Activated T-helper 2 cell treated with anti-CD3 and anti-CD28 coated beads, Interferon-gamma antibody, Interleukin-2, Interleukin-4, amounts not matched to agents 10 μg/mL and 5 μg/mL and 100 μg/mL, durations not matched to agents 14 hours and 24 hours and 36 hours (primary cell): ENCODE measurements at regions of chr11 and their contacts with region 1.

Region 1: DNA sequence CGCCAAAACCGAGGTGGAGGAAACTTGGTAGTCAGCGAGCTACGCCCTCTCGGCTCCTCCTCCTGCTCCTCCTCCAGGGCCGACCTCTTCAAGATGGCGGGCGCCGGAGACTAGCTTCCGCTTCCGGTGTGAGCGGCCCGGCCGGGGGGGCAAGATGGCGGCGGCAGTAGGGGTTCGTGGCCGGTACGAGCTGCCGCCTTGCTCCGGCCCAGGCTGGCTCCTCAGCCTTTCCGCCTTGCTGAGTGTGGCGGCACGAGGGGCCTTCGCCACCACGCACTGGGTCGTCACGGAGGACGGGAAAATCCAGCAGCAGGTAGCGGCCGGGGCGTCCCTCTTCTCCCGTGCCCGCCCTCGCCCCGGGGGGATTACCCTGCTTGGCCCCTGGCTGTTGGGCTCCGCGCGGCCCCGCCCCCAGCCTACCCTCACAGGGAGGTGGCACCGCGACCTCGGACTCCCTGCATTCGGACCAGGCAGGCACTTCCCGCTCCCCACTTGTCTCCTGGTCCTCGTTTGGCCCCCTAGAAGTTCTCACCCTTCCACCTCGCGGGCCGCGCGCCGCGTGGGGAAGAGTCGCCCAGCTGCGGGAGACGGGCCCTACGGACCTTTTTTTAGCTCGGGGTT is at the start of gene TTC17:
- DNase-seq: peak; percentile 92
- H3K4me3 Mint-ChIP-seq: peak within 1 kb of the TSS; percentile 98
- H3K27ac Mint-ChIP-seq: peak within 1 kb of the TSS; percentile 97
- H3K4me1 Mint-ChIP-seq: peaks cover 36% of the 10 kb centered on the region
- H3K27me3 Mint-ChIP-seq: no peaks in the 10 kb centered on the region
- total RNA-seq, gene TTC17: 63.5 and 76.1 TPM in 2 replicates

Region 2: DNA sequence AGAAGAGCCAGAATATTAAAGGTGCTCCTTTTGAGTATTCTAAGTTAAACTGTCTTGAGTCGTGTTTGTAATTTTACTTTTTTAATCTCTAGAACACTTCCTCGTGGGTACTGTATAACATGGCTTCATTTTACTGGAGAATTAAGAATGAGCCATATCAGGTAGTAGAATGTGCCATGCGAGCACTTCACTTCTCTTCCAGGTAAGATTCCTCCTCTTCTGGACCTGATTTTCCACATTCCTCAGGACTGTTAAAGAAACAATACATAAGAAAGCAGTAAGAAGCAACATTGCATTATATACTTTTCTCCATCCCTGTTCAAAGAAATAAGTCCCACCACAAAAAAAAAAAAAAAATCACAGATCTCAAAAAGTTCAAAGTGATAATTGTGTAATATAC is 37.7 kb after region 1 on chr11:
- intact Hi-C with region 1: loop called (anchors 2 kb)
- DNase-seq: no peak
- H3K4me3 Mint-ChIP-seq: no peak overlapping the region
- H3K27ac Mint-ChIP-seq: no peak overlapping the region
- H3K4me1 Mint-ChIP-seq: peaks cover 34% of the 10 kb centered on the region
- H3K27me3 Mint-ChIP-seq: no peaks in the 10 kb centered on the region

Region 3: GRCh38 chr11:43419460-43419859 is 60.5 kb after region 1 on chr11:
- intact Hi-C with region 1: loop called (anchors 2 kb)
- DNase-seq: no peak
- H3K4me3 Mint-ChIP-seq: no peak overlapping the region
- H3K27ac Mint-ChIP-seq: no peak overlapping the region
- H3K4me1 Mint-ChIP-seq: peaks cover 3% of the 10 kb centered on the region
- H3K27me3 Mint-ChIP-seq: no peaks in the 10 kb centered on the region

Region 4: GRCh38 chr11:43830928-43831440 is 472.1 kb after region 1 on chr11:
- intact Hi-C with region 1: loop called (anchors 2 kb)
- DNase-seq: no peak
- H3K4me3 Mint-ChIP-seq: no peak overlapping the region
- H3K27ac Mint-ChIP-seq: peak overlapping the region; percentile 91
- H3K4me1 Mint-ChIP-seq: peaks cover 16% of the 10 kb centered on the region
- H3K27me3 Mint-ChIP-seq: no peaks in the 10 kb centered on the region